HCT116 (cell line): ENCODE measurements at regions of chr13 and their contacts with region 1.

Region 1: GRCh38 chr13:22487932-22488331 is 692.8 kb upstream of the SGCG start:
- DNase-seq: no peak
- ATAC-seq: no peak
- H3K4me3 ChIP-seq: no peak overlapping the region
- H3K27ac ChIP-seq: no peak overlapping the region
- H3K4me1 ChIP-seq: no peaks in the 10 kb centered on the region
- H3K27me3 ChIP-seq: no peaks in the 10 kb centered on the region
- CTCF ChIP-seq: no peak
- POLR2A ChIP-seq: no peak
- RAD21 ChIP-seq: no peak

Region 2: DNA sequence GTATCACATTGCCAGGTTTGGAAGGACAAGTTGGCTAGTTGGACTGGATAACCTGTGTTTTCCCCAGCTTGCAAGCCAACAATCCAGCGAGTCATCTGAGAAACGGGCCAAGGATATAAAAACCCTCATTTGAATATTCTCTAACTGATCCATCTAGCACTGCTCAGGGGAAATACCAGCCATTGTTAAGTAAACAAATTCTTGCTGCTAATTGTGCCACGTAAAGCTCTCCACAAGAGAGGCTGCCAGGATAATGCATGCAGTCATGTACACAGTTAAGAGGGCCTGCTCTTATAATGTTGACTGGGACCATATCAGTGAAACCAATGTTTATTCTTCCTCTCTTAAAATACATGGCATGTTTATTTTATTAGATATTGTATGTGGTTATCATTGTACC is 29.6 kb after region 1 on chr13:
- CTCF ChIA-PET with region 1: no interaction called
- POLR2A ChIA-PET with region 1: no interaction called
- RAD21 ChIA-PET with region 1: no interaction called
- intact Hi-C with region 1: no loop called
- DNase-seq: no peak
- ATAC-seq: no peak
- H3K4me3 ChIP-seq: no peak overlapping the region
- H3K27ac ChIP-seq: no peak overlapping the region
- H3K4me1 ChIP-seq: no peaks in the 10 kb centered on the region
- H3K27me3 ChIP-seq: no peaks in the 10 kb centered on the region
- CTCF ChIP-seq: no peak
- POLR2A ChIP-seq: no peak
- RAD21 ChIP-seq: no peak

Region 3: GRCh38 chr13:23934520-23934919 is 1446.6 kb after region 1 on chr13:
- CTCF ChIA-PET with region 1: no interaction called
- POLR2A ChIA-PET with region 1: no interaction called
- RAD21 ChIA-PET with region 1: no interaction called
- intact Hi-C with region 1: loop called (anchors 10 kb)
- DNase-seq: no peak
- ATAC-seq: no peak
- H3K4me3 ChIP-seq: no peak overlapping the region
- H3K27ac ChIP-seq: no peak overlapping the region
- H3K4me1 ChIP-seq: no peaks in the 10 kb centered on the region
- H3K27me3 ChIP-seq: no peaks in the 10 kb centered on the region; the same call in 1 of the 2 replicates
- CTCF ChIP-seq: no peak
- POLR2A ChIP-seq: no peak
- RAD21 ChIP-seq: no peak